Activated B cell treated with CpG ODN at 0.5 μM for 24 hours (primary cell): ENCODE measurements at regions of chr6 and their contacts with region 1.

Region 1: DNA sequence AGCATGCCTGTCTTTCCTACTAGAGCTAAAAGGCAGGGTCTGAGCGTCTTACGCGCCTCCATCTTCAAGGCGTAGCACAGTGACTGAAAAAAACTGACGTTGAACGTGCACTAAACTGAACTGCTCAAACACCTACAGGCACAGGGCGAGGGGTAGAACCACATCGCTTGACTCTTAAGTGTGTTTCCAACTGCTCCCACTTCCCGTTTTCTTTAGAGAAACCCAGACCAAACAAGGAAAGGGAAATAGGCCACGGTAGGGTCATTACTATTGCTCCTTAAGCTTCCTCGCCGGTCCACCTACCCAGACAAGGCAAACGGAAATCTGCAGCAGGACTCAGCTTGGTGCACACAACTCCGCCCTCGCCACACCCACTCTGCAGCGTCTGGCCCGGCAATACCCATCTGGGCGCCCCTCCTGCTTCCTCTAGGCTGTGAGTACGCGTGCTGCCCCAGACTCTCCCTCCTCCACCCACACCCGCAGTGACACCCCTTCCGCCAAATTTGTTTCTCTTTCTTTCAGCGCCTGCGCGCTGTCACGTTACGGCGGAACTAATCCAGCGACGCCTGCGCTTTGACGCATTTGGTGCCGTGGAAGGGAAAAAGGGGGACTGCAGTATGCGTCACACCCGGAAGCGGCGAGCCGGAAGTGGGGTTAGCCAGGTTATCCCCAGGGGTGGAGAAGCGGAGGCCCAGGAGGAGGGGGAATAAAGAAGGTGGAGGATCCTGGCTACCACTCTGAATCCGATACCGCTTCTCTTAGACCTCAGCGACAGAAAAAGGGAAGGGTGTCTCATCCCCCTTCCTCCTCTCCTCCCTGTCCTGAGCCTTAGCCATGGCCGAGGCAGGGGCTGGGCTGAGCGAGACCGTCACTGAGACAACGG is at the start of gene PPP1R11:
- DNase-seq: peak; percentile 95
- ATAC-seq: peak; percentile 96
- H3K4me3 Mint-ChIP-seq: peak within 1 kb of the TSS; percentile 98
- H3K27ac Mint-ChIP-seq: peak within 1 kb of the TSS; percentile 99
- H3K4me1 Mint-ChIP-seq: peaks cover 60% of the 10 kb centered on the region
- H3K27me3 Mint-ChIP-seq: peaks cover 17% of the 10 kb centered on the region
- CTCF ChIP-seq: no peak
- total RNA-seq, gene PPP1R11: 43.0 and 43.1 TPM in 2 replicates

Region 2: DNA sequence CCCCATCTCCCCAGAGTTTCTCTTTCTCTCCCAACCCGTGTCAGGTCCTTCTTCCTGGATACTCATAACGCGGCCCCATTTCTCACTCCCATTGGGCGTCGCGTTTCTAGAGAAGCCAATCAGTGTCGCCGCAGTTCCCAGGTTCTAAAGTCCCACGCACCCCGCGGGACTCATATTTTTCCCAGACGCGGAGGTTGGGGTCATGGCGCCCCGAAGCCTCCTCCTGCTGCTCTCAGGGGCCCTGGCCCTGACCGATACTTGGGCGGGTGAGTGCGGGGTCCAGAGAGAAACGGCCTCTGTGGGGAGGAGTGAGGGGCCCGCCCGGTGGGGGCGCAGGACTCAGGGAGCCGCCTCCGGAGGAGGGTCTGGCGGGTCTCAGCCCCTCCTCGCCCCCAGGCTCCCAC is 343.6 kb before region 1 on chr6 and contains the start of gene HLA-F:
- CTCF ChIA-PET with region 1: no interaction called
- POLR2A ChIA-PET with region 1: no interaction called
- intact Hi-C with region 1: loop called (anchors 5 kb)
- DNase-seq: peak; percentile 76
- ATAC-seq: peak; percentile 89
- H3K4me3 Mint-ChIP-seq: peak within 1 kb of the TSS; percentile 94
- H3K27ac Mint-ChIP-seq: peak within 1 kb of the TSS; percentile 98
- H3K4me1 Mint-ChIP-seq: peaks cover 61% of the 10 kb centered on the region
- H3K27me3 Mint-ChIP-seq: no peaks in the 10 kb centered on the region
- CTCF ChIP-seq: no peak
- total RNA-seq, gene HLA-F: 726 and 736 TPM in 2 replicates

Region 3: DNA sequence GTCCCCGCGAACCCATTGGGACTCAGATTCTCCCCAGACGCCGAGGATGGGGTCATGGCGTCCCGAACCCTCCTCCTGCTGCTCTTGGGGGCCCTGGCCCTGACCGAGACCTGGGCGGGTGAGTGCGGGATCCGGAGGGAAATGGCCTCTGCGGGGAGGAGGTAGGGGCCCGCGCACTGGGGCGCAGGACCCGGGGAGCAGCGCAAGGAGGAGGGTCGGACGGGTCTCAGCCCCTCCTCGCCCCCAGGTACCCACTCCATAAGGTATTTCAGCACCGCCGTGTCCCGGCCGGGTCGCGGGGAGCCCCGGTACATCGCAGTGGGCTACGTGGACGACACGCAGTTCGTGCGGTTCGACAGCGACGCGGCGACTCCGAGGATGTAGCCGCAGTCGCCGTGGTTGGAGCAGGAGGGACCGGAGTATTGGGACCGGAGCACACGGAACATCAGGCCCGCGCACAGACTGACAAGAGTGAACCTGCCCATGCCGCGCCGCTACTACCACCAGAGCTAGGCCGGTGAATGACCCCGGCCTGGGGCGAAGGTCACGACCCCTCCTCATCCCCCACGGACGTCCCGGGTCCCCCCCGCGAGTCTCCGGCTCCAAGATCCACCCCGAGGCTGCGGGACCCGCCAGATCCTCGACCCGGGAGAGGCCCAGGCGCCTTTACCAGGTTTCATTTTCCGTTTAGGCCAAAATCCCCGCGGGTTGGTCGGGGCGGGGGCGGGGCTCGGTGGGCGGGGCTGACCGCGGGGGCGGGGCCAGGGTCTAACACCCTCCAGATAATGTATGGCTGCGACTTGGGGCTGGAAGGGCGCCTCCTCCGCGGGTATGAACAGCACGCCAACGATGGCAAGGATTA is 140.2 kb before region 1 on chr6:
- CTCF ChIA-PET with region 1: no interaction called
- POLR2A ChIA-PET with region 1: interaction called, 3 read pairs
- intact Hi-C with region 1: loop called (anchors 2 kb)
- DNase-seq: peak; percentile 50
- ATAC-seq: peak; percentile 77
- H3K4me3 Mint-ChIP-seq: peak overlapping the region; percentile 90
- H3K27ac Mint-ChIP-seq: peak overlapping the region; percentile 94
- H3K4me1 Mint-ChIP-seq: peaks cover 16% of the 10 kb centered on the region
- H3K27me3 Mint-ChIP-seq: no peaks in the 10 kb centered on the region
- CTCF ChIP-seq: no peak

Region 4: DNA sequence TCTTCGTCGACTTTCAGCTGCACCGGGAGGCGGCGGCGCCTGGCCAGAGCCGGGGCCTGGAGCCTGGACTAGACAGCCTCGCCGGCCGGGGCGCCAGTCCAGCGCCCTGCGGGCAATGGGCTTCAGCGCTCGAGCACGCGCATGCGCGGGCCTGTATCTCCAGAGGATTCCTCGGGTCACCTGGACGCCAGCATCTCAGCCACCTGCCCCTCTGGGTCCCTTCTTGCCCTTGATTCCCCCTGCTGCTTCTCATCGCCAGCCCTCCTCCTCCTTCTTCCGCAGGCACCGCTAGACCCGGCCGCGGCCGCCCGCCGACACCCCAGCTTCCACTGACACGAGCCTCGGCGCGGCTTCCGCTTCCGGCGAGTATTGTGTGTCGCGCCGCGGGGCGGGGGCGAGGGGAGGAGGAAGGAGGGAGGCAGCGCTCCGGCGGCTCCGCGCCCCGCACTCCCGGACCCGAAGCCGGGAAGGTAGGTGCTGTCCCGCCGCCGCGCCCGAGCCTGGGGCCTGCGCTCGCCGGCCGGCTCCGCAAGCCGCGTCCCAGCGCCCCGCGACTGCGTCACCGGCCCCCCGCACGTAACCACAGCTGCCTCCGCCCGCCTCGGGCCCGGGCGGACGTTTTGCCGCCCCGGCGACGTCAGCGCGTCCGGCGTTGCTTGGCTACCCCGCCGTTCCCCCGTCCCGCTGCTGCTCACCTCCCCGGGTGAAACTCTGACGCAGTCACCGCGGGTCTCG is 259.9 kb after region 1 on chr6 and contains the start of gene TRIM39:
- CTCF ChIA-PET with region 1: no interaction called
- POLR2A ChIA-PET with region 1: interaction called, 8 read pairs
- intact Hi-C with region 1: loop called (anchors 1 kb)
- DNase-seq: peak; percentile 90
- ATAC-seq: peak; percentile 68
- H3K4me3 Mint-ChIP-seq: peak within 1 kb of the TSS; percentile 96
- H3K27ac Mint-ChIP-seq: peak within 1 kb of the TSS; percentile 99
- H3K4me1 Mint-ChIP-seq: peaks cover 57% of the 10 kb centered on the region
- H3K27me3 Mint-ChIP-seq: no peaks in the 10 kb centered on the region
- CTCF ChIP-seq: no peak
- total RNA-seq, gene TRIM39: 21.6 and 22.0 TPM in 2 replicates

Region 5: GRCh38 chr6:30344868-30345671 is 278.3 kb after region 1 on chr6 and contains the start of gene RPP21:
- CTCF ChIA-PET with region 1: no interaction called
- POLR2A ChIA-PET with region 1: no interaction called
- intact Hi-C with region 1: loop called (anchors 5 kb)
- DNase-seq: peak; percentile 90
- ATAC-seq: peak; percentile 99
- H3K4me3 Mint-ChIP-seq: peak within 1 kb of the TSS; percentile 92
- H3K27ac Mint-ChIP-seq: peak within 1 kb of the TSS; percentile 94
- H3K4me1 Mint-ChIP-seq: peaks cover 32% of the 10 kb centered on the region
- H3K27me3 Mint-ChIP-seq: no peaks in the 10 kb centered on the region
- CTCF ChIP-seq: no peak
- total RNA-seq, gene RPP21: 38.1 and 46.8 TPM in 2 replicates

Region 6: GRCh38 chr6:30556066-30556905 is 489.5 kb after region 1 on chr6 and contains the start of gene GNL1:
- CTCF ChIA-PET with region 1: no interaction called
- POLR2A ChIA-PET with region 1: interaction called, 5 read pairs
- intact Hi-C with region 1: loop called (anchors 5 kb)
- DNase-seq: peak; percentile 99
- ATAC-seq: peak; percentile 89
- H3K4me3 Mint-ChIP-seq: peak within 1 kb of the TSS; percentile 94
- H3K27ac Mint-ChIP-seq: peak within 1 kb of the TSS; percentile 97
- H3K4me1 Mint-ChIP-seq: peaks cover 40% of the 10 kb centered on the region
- H3K27me3 Mint-ChIP-seq: no peaks in the 10 kb centered on the region
- CTCF ChIP-seq: no peak
- total RNA-seq, gene GNL1: 67.2 and 67.4 TPM in 2 replicates